Colonic mucosa (tissue), 4 donors: ENCODE measurements at regions of chr4 and their contacts with region 1.

Region 1: DNA sequence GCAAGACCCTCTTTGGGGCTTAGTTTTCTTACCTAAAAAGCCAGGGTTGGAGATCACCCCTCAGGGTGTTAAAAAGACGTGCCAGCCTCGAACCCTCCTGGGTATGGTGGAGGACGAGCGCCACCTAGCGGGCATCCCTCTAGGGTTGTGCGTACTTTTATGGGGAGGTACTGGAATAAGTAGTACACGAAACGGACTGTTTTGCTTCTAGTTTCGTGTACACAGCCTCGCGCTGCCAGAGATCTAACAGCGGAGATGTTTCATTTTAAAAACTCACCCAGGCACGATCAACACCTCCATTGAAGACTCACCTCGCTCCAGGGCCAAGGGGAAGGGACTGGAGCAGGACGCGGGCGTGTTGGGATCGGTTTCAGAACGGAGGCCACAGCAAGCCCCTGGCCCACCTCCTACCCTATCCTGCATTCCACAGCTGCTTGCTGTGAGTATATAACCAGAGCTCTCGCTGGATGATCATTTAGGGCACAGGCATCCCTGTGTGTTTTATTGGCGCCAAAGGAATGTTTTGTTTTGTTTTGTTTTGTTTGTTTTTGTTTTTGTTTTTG is 4.8 kb upstream of the NKX3-2 start:
- DNase-seq: peak; percentile 90
- H3K4me3 ChIP-seq: peak overlapping the region; percentile 40
- H3K27ac ChIP-seq: no peak overlapping the region
- H3K4me1 ChIP-seq: peaks cover 3% of the 10 kb centered on the region
- H3K27me3 ChIP-seq: peaks cover 46% of the 10 kb centered on the region
- CTCF ChIP-seq: peak; percentile 84

Region 2: DNA sequence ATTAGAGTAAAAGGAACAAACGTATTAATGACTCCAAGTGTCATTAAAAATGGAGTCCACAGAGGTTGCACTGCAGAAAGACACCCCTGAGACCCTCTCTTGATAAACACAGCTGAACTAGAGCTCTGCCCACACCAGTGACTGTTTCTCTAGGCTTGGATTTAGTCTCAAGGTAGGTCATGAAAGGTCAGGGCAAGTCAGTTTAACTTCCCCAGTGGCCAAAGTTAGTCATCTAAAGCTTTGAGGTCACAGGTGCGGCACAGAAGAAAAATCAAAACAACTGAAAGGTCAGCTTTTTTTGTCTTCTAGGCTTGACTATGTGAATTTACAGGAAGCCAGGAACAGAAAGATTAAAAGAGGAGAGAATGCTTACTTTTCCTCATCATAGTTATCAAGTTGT is 814.5 kb before region 1 on chr4:
- intact Hi-C with region 1: loop called (anchors 5 kb)
- DNase-seq: no peak
- H3K4me3 ChIP-seq: no peak overlapping the region
- H3K27ac ChIP-seq: no peak overlapping the region
- H3K4me1 ChIP-seq: no peaks in the 10 kb centered on the region
- H3K27me3 ChIP-seq: no peaks in the 10 kb centered on the region
- CTCF ChIP-seq: no peak

Region 3: DNA sequence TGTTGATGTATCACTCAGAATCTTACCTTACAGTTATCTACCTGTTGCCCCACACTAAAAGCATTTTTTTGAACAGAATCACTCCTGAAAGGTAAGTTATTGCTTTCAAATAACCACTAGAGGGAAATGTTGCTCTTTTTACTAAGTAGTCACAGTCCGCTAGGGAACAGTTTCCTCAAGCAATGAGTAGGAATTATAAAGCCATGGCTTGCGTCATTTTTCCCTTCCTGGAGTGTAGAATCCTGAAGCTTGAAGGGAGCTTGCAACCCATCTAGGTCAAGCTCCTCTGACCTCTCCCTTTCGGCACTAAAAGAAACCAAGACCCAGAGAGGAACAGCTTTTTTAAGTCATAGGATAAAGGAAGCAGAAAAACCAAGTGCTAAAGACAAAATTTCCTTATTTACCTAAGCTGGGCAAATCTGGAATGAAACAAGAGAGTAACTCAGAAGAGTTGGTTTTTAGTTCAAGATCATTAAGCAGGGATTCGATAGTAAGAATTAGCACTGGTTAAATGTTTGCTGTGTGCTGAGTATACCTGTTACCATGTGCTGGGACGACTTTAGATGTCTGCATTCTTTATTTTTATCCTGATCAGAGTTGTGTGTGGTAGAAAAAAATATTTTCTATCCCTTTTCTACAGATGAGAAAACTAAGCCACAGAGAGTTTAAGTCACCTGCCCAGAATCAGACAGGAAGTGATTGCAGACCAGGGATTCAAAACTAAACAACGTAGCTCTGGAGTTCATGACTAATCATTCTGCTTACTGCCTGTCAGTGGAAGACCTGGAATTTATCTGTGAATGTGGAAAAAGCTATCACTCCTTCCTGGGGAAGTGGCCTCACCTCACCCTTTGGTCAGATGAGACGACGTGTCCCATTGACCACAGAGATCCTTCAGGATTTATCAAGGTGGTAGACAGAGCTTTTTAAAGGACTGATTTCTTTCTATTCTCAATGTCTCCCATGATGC is 696.4 kb before region 1 on chr4:
- intact Hi-C with region 1: loop called (anchors 1 kb)
- DNase-seq: peak; percentile 17
- H3K4me3 ChIP-seq: no peak overlapping the region
- H3K27ac ChIP-seq: no peak overlapping the region
- H3K4me1 ChIP-seq: no peaks in the 10 kb centered on the region
- H3K27me3 ChIP-seq: no peaks in the 10 kb centered on the region
- CTCF ChIP-seq: peak; percentile 35

Region 4: GRCh38 chr4:13047591-13047990 is 501.5 kb before region 1 on chr4:
- intact Hi-C with region 1: no loop called
- DNase-seq: no peak
- H3K4me3 ChIP-seq: no peak overlapping the region
- H3K27ac ChIP-seq: no peak overlapping the region
- H3K4me1 ChIP-seq: no peaks in the 10 kb centered on the region
- H3K27me3 ChIP-seq: no peaks in the 10 kb centered on the region
- CTCF ChIP-seq: no peak

Region 5: DNA sequence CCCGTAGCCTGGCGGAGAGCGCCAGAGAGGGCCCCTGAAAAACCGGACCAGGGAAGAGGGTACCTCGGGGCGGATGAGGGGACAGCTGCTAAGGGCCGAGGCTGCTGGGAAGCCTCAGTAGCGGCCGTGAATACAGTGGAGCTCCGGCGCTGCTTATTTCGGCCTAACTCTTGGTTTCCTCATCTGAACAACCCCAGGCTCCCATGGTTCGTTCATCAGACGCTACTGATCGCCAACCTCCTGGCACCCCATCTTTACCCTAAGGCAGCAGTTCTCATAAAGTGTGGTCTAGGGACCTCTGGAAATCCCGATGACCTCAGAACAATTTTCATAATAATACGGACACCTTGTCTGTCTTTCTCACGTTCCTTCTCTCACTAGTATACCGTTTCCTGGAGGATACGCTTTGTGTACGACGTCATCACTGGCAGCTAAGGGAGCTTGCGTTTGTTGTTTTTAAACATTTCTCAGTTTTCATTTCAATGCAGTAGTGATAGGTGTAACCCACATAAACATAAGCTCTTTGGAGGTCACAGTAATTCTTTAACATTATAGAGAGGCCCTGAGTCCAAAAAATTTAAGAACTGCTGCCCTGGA is 64.2 kb before region 1 on chr4:
- intact Hi-C with region 1: loop called (anchors 5 kb)
- DNase-seq: no peak
- H3K4me3 ChIP-seq: peak overlapping the region; percentile 75
- H3K27ac ChIP-seq: peak overlapping the region; percentile 75
- H3K4me1 ChIP-seq: no peaks in the 10 kb centered on the region
- H3K27me3 ChIP-seq: no peaks in the 10 kb centered on the region
- CTCF ChIP-seq: no peak